ENCODE measurements at regions of chr2 and their contacts with region 1.

Region 1: DNA sequence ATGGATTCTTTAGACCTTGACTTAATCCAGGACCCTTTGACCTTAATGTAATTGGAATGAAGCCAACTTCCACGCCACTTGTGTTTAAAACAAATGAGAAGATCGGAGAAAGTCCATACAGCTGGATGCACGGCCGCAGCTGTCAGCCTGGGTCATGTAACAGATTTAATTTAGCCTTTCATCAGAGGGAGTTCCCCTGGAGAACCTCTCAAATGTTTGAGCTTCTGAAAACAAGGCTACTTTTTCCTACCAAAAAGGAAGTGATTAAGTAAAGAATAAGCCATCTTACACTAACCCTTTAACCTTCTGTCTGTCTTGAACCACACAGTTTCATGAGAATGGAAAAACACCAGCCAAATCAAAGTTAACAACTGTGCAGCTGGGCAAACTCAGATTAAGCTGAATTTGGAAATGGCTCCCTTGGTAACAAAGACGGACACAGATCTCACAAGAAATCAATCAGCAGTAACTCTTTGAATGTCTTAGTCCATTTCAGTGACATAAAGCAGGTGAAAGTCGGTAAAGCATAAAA is 103.6 kb downstream of the DOCK10 start:
- DNase-seq: peak; percentile 76
- H3K4me3 Mint-ChIP-seq: peak overlapping the region; percentile 77
- H3K27ac Mint-ChIP-seq: peak overlapping the region; percentile 87
- H3K4me1 Mint-ChIP-seq: peaks cover 61% of the 10 kb centered on the region
- H3K27me3 Mint-ChIP-seq: no peaks in the 10 kb centered on the region

Region 2: GRCh38 chr2:224885836-224886547 is 52.7 kb before region 1 on chr2:
- intact Hi-C with region 1: loop called (anchors 2 kb)
- DNase-seq: no peak
- H3K4me3 Mint-ChIP-seq: no peak overlapping the region
- H3K27ac Mint-ChIP-seq: peak overlapping the region; percentile 87
- H3K4me1 Mint-ChIP-seq: peaks cover 73% of the 10 kb centered on the region
- H3K27me3 Mint-ChIP-seq: no peaks in the 10 kb centered on the region

Region 3: GRCh38 chr2:225010804-225011203 is 72.1 kb after region 1 on chr2:
- intact Hi-C with region 1: loop called (anchors 2 kb)
- DNase-seq: no peak
- H3K4me3 Mint-ChIP-seq: peak overlapping the region; percentile 41
- H3K27ac Mint-ChIP-seq: peak overlapping the region; percentile 89
- H3K4me1 Mint-ChIP-seq: peaks cover 63% of the 10 kb centered on the region
- H3K27me3 Mint-ChIP-seq: no peaks in the 10 kb centered on the region